Activated naive CD4-positive, alpha-beta T cell treated with anti-CD3 and anti-CD28 coated beads for 36 hours (primary cell): ENCODE measurements at regions of chr16 and their contacts with region 1.

Region 1: GRCh38 chr16:89171463-89172170 is at the start of gene CDH15:
- DNase-seq: peak; percentile 96
- H3K4me3 Mint-ChIP-seq: peak within 1 kb of the TSS; percentile 63
- H3K27ac Mint-ChIP-seq: no peak within 1 kb of the TSS
- H3K4me1 Mint-ChIP-seq: peaks cover 9% of the 10 kb centered on the region
- H3K27me3 Mint-ChIP-seq: peaks cover 3% of the 10 kb centered on the region
- total RNA-seq, gene CDH15: not detected

Region 2: DNA sequence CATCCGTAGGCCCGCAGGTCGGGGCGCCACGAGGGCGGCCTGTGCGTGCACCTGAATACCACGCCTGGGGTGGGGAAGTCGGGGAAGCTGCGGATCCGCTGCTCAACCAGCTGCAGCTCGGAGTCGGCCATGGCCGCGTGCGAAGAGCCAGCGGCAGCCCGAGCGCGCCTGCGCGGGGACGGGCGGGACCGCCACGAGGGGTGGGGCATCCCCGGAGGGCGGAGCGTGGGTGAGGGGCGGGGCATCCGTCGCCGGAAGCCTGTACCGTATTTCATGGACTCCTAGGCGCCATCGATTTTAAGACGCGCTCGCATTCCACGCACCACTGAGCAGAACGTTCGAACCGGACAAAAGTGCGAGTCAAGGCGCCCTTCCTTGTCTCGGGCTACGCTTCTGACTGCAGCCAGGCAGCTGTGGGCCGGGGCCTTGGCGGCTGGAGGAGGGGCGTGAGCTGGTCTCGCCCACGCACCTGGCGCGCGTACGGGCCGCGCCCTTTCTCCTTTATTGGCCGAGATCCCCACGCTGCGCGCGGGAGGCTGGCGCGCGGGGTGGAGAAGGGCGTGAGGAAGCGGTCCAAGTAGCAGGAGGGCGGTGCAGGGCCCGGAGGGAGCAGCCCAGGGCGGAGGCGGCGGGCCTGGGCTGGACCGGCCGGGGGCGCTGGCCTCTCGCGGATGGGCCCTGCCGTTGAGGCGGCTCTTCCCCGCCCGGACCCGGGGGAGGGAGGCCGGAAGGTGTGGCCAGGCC is 359.7 kb before region 1 on chr16 and contains the start of gene APRT:
- CTCF ChIA-PET with region 1: interaction called, 4 read pairs
- intact Hi-C with region 1: loop called (anchors 1 kb)
- DNase-seq: peak; percentile 97
- H3K4me3 Mint-ChIP-seq: peak within 1 kb of the TSS; percentile 97
- H3K27ac Mint-ChIP-seq: peak within 1 kb of the TSS; percentile 97
- H3K4me1 Mint-ChIP-seq: peaks cover 27% of the 10 kb centered on the region
- H3K27me3 Mint-ChIP-seq: no peaks in the 10 kb centered on the region
- total RNA-seq, gene APRT: 314 TPM

Region 3: GRCh38 chr16:89193021-89193575 is 21.5 kb after region 1 on chr16:
- CTCF ChIA-PET with region 1: no interaction called
- intact Hi-C with region 1: loop called (anchors 1 kb)
- DNase-seq: no peak
- H3K4me3 Mint-ChIP-seq: no peak overlapping the region
- H3K27ac Mint-ChIP-seq: no peak overlapping the region
- H3K4me1 Mint-ChIP-seq: no peaks in the 10 kb centered on the region
- H3K27me3 Mint-ChIP-seq: no peaks in the 10 kb centered on the region

Region 4: GRCh38 chr16:89217388-89218191 is 46.0 kb after region 1 on chr16 and contains the start of gene ZNF778:
- CTCF ChIA-PET with region 1: interaction called, 3 read pairs
- intact Hi-C with region 1: loop called (anchors 1 kb)
- DNase-seq: peak; percentile 83
- H3K4me3 Mint-ChIP-seq: peak within 1 kb of the TSS; percentile 83
- H3K27ac Mint-ChIP-seq: peak within 1 kb of the TSS; percentile 89
- H3K4me1 Mint-ChIP-seq: peaks cover 20% of the 10 kb centered on the region
- H3K27me3 Mint-ChIP-seq: no peaks in the 10 kb centered on the region
- total RNA-seq, gene ZNF778: 3.5 to 3.6 TPM